Activated T-helper 1 cell treated with anti-CD3 and anti-CD28 coated beads, Interleukin-12 subunit alpha, Interleukin-12 subunit beta, Interleukin-2, Interleukin-4 antibody, amounts not matched to agents 30 ng/mL and 10 ng/mL and 1 ng/mL, durations not matched to agents 14 hours and 24 hours and 36 hours (primary cell): ENCODE measurements at regions of chr1 and their contacts with region 1.

Region 1: GRCh38 chr1:116777831-116778830 is 23.9 kb downstream of the CD2 start:
- DNase-seq: no peak
- H3K4me3 Mint-ChIP-seq: peak overlapping the region; percentile 54
- H3K27ac Mint-ChIP-seq: peak overlapping the region; percentile 83
- H3K4me1 Mint-ChIP-seq: peaks cover 37% of the 10 kb centered on the region
- H3K27me3 Mint-ChIP-seq: no peaks in the 10 kb centered on the region

Region 2: GRCh38 chr1:116740746-116741145 is 37.4 kb before region 1 on chr1:
- intact Hi-C with region 1: no loop called
- DNase-seq: no peak
- H3K4me3 Mint-ChIP-seq: peak overlapping the region; percentile 64
- H3K27ac Mint-ChIP-seq: peak overlapping the region; percentile 99
- H3K4me1 Mint-ChIP-seq: peaks cover 57% of the 10 kb centered on the region
- H3K27me3 Mint-ChIP-seq: no peaks in the 10 kb centered on the region

Region 3: GRCh38 chr1:116806245-116806644 is 28.1 kb after region 1 on chr1:
- intact Hi-C with region 1: loop called (anchors 1 kb)
- DNase-seq: peak; percentile 40
- H3K4me3 Mint-ChIP-seq: peak overlapping the region; percentile 71
- H3K27ac Mint-ChIP-seq: peak overlapping the region; percentile 94
- H3K4me1 Mint-ChIP-seq: peaks cover 93% of the 10 kb centered on the region
- H3K27me3 Mint-ChIP-seq: no peaks in the 10 kb centered on the region

Region 4: DNA sequence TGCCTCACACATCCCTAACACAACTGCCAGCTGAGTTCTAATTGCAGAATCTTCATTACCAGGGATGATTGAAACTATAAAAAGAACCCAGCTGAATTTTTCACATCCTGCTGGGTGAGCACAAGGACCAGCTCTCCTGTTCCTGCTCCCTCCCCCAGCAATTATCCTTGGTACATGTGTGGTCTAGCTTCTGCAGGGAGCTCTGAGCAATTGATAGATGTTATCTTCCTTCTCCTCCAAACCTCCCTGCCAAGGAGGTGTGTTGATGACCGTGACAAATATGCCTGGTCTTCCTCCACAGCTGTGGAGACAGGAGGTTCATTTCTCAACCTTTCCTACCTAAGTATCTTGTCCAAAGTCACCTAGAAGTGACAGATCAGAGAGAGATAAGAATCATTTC is 523.8 kb after region 1 on chr1:
- intact Hi-C with region 1: no loop called
- DNase-seq: no peak
- H3K4me3 Mint-ChIP-seq: no peak overlapping the region
- H3K27ac Mint-ChIP-seq: no peak overlapping the region
- H3K4me1 Mint-ChIP-seq: no peaks in the 10 kb centered on the region
- H3K27me3 Mint-ChIP-seq: no peaks in the 10 kb centered on the region